ENCODE measurements at regions of chr6 and their contacts with region 1.

Region 1: DNA sequence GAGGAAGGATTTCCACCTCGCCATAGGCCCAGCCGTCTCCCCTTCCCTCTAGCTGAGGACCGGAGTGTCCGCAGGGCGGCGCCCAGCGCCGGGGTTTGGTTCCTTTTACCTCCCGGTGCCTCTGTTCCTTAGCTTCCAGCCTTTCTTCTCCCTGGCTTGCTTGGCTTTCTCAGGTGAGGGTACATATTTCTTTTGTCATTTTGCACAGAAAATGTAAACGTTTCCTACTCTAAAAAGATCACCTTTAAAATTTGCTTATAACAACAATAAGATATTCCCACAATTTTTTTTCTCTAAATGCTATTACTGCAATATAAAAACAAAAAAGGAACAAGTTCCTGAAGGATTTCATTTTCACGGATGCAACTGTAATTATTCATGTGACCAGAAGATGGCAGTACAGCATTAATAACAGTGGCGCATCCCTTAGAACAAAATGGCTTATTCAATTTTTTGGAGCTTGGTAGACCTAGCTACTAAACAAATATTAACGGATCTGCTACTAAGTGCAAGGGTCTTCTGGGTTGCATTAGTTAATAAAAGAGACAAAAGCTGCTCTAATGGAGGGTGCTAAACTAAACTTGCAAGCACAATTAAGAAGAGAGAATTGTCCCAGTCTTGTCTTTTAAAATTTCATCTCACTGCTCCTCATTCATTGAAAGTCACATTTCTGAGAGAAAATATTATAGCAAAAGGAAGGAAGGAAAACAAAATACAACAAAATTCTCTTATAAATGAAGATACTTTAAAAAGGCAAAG is 172.9 kb downstream of the ADGRG6 start:
- DNase-seq: peak; percentile 38
- CTCF ChIP-seq: peak; percentile 78

Region 2: GRCh38 chr6:142132625-142133024 is 342.1 kb before region 1 on chr6 and contains the start of gene GJE1:
- CTCF ChIA-PET with region 1: no interaction called
- POLR2A ChIA-PET with region 1: no interaction called
- DNase-seq: no peak
- CTCF ChIP-seq: no peak

Region 3: GRCh38 chr6:142349187-142349823 is 125.4 kb before region 1 on chr6:
- CTCF ChIA-PET with region 1: no interaction called
- POLR2A ChIA-PET with region 1: no interaction called
- DNase-seq: no peak
- CTCF ChIP-seq: no peak

Region 4: DNA sequence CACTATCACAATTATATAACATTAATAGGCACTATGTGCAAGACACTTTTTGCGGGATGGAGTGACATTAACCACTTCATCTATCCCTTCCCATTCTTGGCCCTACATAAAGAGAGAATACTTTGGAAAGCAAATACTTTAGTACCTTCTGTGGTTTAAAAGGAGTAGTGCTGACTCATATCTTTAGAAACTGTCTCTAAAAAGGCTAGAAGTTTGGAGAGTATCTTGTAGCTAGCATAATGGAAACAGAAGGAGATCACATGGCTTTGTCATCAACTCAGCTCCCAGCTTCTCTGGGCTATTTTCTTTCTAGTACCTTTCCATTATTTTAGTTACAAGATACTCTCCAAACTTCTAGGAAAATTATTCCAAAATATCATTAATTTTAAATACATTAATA is 15.4 kb before region 1 on chr6:
- CTCF ChIA-PET with region 1: interaction called, 10 read pairs
- POLR2A ChIA-PET with region 1: no interaction called
- DNase-seq: no peak
- CTCF ChIP-seq: no peak

Region 5: GRCh38 chr6:142485256-142485655 is 10.5 kb after region 1 on chr6:
- CTCF ChIA-PET with region 1: interaction called, 16 read pairs
- POLR2A ChIA-PET with region 1: no interaction called
- DNase-seq: no peak
- CTCF ChIP-seq: no peak

Region 6: DNA sequence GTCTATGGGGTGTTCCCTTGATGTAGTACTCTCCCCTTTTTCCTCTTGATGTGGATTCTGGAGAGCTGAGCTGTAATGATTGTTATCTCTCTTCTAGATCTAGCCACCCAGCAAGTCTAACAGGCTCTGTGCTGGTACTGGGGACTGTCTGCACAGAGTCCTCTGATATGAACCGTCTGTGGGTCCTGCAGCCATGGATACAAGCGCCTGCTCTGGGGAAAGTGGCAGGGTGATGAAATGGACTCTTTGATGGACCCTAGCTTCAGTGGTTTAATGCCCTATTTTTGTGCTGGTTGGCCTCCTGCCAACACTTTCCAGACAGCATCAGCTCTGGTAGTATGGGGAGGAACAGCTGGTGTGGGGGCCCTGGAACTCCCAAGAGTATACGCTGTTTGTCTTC is 43.4 kb after region 1 on chr6:
- CTCF ChIA-PET with region 1: interaction called, 11 read pairs
- POLR2A ChIA-PET with region 1: no interaction called
- DNase-seq: no peak
- CTCF ChIP-seq: no peak

Measured in GM10248 (cell line).